PC-9 (cell line): ENCODE measurements at regions of chr17 and their contacts with region 1.

Region 1: DNA sequence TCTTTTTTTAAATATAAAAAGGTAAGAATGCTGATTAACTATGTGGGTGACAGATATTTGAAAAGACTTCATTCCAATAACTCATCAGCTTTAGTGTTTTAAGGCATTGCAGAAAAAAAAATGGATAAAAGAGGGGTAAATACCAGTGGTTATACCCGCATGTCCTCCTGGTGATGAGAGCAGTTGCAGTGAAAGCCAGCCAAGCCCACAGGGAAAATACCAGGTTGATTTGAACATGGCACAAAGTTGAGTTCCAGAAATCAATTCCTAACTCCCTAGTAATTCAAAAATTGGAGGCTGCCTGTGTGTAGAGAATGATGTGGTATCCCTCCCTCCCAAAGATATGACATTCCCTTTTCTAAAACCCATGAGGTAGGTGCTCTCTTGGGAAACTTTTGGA is 453.2 kb upstream of the SOX9 start:
- DNase-seq: no peak
- H3K4me3 ChIP-seq: no peak overlapping the region
- H3K27ac ChIP-seq: no peak overlapping the region
- H3K4me1 ChIP-seq: no peaks in the 10 kb centered on the region
- H3K27me3 ChIP-seq: no peaks in the 10 kb centered on the region
- CTCF ChIP-seq: no peak

Region 2: GRCh38 chr17:69796078-69796477 is 1871.6 kb before region 1 on chr17:
- CTCF ChIA-PET with region 1: interaction called, 14 read pairs
- POLR2A ChIA-PET with region 1: no interaction called
- intact Hi-C with region 1: no loop called
- DNase-seq: no peak
- H3K4me3 ChIP-seq: no peak overlapping the region
- H3K27ac ChIP-seq: no peak overlapping the region
- H3K4me1 ChIP-seq: no peaks in the 10 kb centered on the region
- H3K27me3 ChIP-seq: no peaks in the 10 kb centered on the region
- CTCF ChIP-seq: no peak

Region 3: GRCh38 chr17:71516149-71516548 is 151.5 kb before region 1 on chr17:
- CTCF ChIA-PET with region 1: no interaction called
- POLR2A ChIA-PET with region 1: interaction called, 15 read pairs
- intact Hi-C with region 1: no loop called
- DNase-seq: no peak
- H3K4me3 ChIP-seq: no peak overlapping the region
- H3K27ac ChIP-seq: no peak overlapping the region
- H3K4me1 ChIP-seq: no peaks in the 10 kb centered on the region
- H3K27me3 ChIP-seq: no peaks in the 10 kb centered on the region
- CTCF ChIP-seq: no peak

Region 4: GRCh38 chr17:71649941-71650350 is 17.7 kb before region 1 on chr17:
- CTCF ChIA-PET with region 1: no interaction called
- POLR2A ChIA-PET with region 1: no interaction called
- intact Hi-C with region 1: no loop called
- DNase-seq: no peak
- H3K4me3 ChIP-seq: no peak overlapping the region
- H3K27ac ChIP-seq: no peak overlapping the region
- H3K4me1 ChIP-seq: no peaks in the 10 kb centered on the region
- H3K27me3 ChIP-seq: no peaks in the 10 kb centered on the region
- CTCF ChIP-seq: no peak